Right ventricle myocardium superior (tissue), 1 donor: ENCODE measurements at regions of chr4 and their contacts with region 1.

Region 1: GRCh38 chr4:83034630-83035494 is at the start of gene COPS4:
- DNase-seq: peak; percentile 97
- ATAC-seq: peak; percentile 100
- total RNA-seq, gene COPS4: 47.4 TPM

Region 2: GRCh38 chr4:82515705-82516104 is 519.2 kb before region 1 on chr4:
- intact Hi-C with region 1: no loop called
- DNase-seq: no peak
- ATAC-seq: peak; percentile 92

Region 3: GRCh38 chr4:82900331-82901128 is 134.3 kb before region 1 on chr4 and contains the start of gene THAP9:
- intact Hi-C with region 1: loop called (anchors 10 kb)
- DNase-seq: peak; percentile 99
- ATAC-seq: peak; percentile 97
- total RNA-seq, gene THAP9: 5.6 TPM

Region 4: GRCh38 chr4:82975792-82976191 is 59.1 kb before region 1 on chr4:
- intact Hi-C with region 1: no loop called
- DNase-seq: no peak
- ATAC-seq: no peak

Region 5: GRCh38 chr4:83012687-83013419 is 22.0 kb before region 1 on chr4:
- intact Hi-C with region 1: loop called (anchors 2 kb)
- DNase-seq: peak; percentile 98
- ATAC-seq: peak; percentile 98

Region 6: GRCh38 chr4:83207497-83208105 is 172.7 kb after region 1 on chr4:
- intact Hi-C with region 1: no loop called
- DNase-seq: no peak
- ATAC-seq: no peak